HepG2 (cell line): ENCODE measurements at regions of chr20 and their contacts with region 1.

Region 1: DNA sequence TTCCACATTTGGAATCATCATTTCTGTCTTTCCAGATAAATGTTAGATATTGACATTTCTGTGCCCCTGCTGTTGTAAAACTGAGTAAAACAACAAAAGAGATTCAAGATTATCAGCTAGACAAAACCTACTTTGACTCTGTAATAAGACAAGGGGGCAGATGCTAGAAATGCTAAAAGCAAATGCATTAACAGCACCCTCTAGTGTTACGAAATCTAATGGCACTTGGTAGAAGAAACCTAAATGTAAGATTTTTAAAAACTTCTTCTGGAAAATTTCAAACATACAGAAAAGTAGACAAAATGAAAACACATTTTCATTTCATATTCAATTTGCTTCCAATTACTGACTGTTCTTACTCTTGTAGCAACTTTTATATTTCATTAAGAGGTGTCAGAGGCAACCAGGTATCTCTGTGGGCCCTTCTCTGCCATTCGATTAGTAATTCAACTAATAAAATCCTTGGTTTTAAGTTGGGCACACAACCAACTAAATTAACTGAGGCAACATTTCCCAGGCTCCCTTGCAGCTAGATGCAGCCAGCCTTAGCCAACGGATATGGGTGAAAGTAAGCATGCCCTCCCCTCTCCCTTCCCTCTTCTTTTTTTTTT is 45.0 kb downstream of the SLC23A2 start:
- DNase-seq: peak; percentile 76
- ATAC-seq: peak; percentile 52; the same call in 2 of the 3 replicates
- H3K4me3 ChIP-seq: no peak overlapping the region
- H3K27ac ChIP-seq: no peak overlapping the region
- H3K4me1 ChIP-seq: peaks cover 44% of the 10 kb centered on the region
- H3K27me3 ChIP-seq: no peaks in the 10 kb centered on the region
- CTCF ChIP-seq: peak; percentile 87
- EP300 ChIP-seq: no peak
- POLR2A ChIP-seq: no peak
- RAD21 ChIP-seq: peak; percentile 86

Region 2: GRCh38 chr20:4875578-4876067 is 80.7 kb before region 1 on chr20:
- CTCF ChIA-PET with region 1: no interaction called
- POLR2A ChIA-PET with region 1: no interaction called
- in situ Hi-C with region 1: no loop called
- intact Hi-C with region 1: loop called (anchors 1 kb)
- DNase-seq: no peak
- ATAC-seq: no peak
- H3K4me3 ChIP-seq: no peak overlapping the region
- H3K27ac ChIP-seq: no peak overlapping the region
- H3K4me1 ChIP-seq: no peaks in the 10 kb centered on the region
- H3K27me3 ChIP-seq: no peaks in the 10 kb centered on the region
- CTCF ChIP-seq: no peak
- EP300 ChIP-seq: no peak
- POLR2A ChIP-seq: no peak
- RAD21 ChIP-seq: no peak